ENCODE measurements at regions of chr12 and their contacts with region 1.

Region 1: DNA sequence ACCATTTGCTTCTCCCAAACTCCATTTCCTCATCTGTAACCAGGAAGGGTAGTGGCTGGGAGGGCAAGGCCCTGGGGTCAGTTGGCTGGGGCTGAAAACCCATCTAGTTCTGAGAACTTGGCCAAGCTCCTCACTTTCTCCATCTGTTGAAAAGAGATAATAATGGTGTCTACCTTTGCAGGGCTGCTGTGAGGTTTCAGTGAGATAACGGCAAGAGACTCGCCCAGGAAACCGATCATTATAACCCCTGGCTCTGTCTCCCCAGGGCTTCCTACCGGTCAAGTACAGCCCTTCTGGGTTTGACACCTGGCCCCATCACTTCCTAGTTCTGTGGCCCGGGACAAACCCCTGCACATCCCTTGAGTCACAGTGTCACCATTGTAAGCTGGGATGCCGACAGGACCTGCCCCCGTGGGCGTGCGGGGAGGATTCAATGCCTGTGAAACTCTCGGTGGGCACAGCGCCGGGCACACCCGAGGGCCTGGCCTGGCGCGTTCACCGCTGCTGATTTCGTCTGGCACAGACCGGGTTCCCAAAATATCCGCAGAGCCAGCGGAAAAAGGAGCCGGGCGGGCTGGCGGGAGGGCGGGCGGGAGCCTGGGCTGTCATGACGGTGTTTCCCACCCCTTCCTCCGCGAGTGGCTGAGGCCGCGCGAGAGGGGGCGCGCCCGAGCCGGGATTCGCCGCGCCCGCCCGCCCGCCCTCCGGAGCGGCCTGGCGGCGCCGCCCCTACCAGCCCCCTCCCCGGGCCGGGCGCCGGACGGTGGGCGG is 4.4 kb downstream of the KMT5A start:
- DNase-seq: peak; percentile 46 to 76 (median 51)
- H3K4me3 ChIP-seq: peak overlapping the region; percentile 79 to 93 (median 89)
- H3K4me3 Mint-ChIP-seq: peak overlapping the region; percentile 89 to 90
- H3K27ac ChIP-seq: peak overlapping the region; percentile 75 to 85
- H3K27ac Mint-ChIP-seq: peak overlapping the region; percentile 88 to 93 (median 91)
- H3K4me1 ChIP-seq: peaks cover 53 to 65% of the 10 kb centered on the region in 2 donors
- H3K4me1 Mint-ChIP-seq: peaks cover 57% of the 10 kb centered on the region
- H3K27me3 ChIP-seq: no peaks in the 10 kb centered on the region
- H3K27me3 Mint-ChIP-seq: peaks cover 0 to 6% (median 0%) of the 10 kb centered on the region in 3 donors
- CTCF ChIP-seq: peak; percentile 8

Region 2: GRCh38 chr12:123354600-123354999 is 33.8 kb before region 1 on chr12:
- intact Hi-C with region 1: loop called in 1 of 2 experiments (anchors 5 kb)
- DNase-seq: no peak
- H3K4me3 ChIP-seq: no peak overlapping the region
- H3K4me3 Mint-ChIP-seq: no peak overlapping the region
- H3K27ac ChIP-seq: no peak overlapping the region
- H3K27ac Mint-ChIP-seq: no peak overlapping the region
- H3K4me1 ChIP-seq: peaks cover 16 to 17% of the 10 kb centered on the region in 2 donors
- H3K4me1 Mint-ChIP-seq: peaks cover 27% of the 10 kb centered on the region
- H3K27me3 ChIP-seq: no peaks in the 10 kb centered on the region
- H3K27me3 Mint-ChIP-seq: peaks cover 0 to 3% (median 0%) of the 10 kb centered on the region in 3 donors
- CTCF ChIP-seq: no peak

Region 3: GRCh38 chr12:123365025-123365917 is 23.1 kb before region 1 on chr12:
- intact Hi-C with region 1: loop called (anchors 2 kb)
- DNase-seq: peak; percentile 97 to 99 (median 99)
- H3K4me3 ChIP-seq: peak overlapping the region; percentile 78 to 89 (median 87)
- H3K4me3 Mint-ChIP-seq: peak overlapping the region; percentile 91 to 94
- H3K27ac ChIP-seq: peak overlapping the region; percentile 93 to 96
- H3K27ac Mint-ChIP-seq: peak overlapping the region; percentile 97 to 99 (median 98)
- H3K4me1 ChIP-seq: peaks cover 25 to 28% of the 10 kb centered on the region in 2 donors
- H3K4me1 Mint-ChIP-seq: peaks cover 18% of the 10 kb centered on the region
- H3K27me3 ChIP-seq: no peaks in the 10 kb centered on the region
- H3K27me3 Mint-ChIP-seq: peaks cover 0 to 2% (median 2%) of the 10 kb centered on the region in 3 donors
- CTCF ChIP-seq: peak; percentile 82

Region 4: GRCh38 chr12:123436017-123436964 is 47.9 kb after region 1 on chr12 and contains the start of gene RILPL2:
- intact Hi-C with region 1: loop called (anchors 5 kb)
- DNase-seq: peak; percentile 96 to 99 (median 98)
- H3K4me3 ChIP-seq: peak within 1 kb of the TSS; percentile 72 to 98 (median 93)
- H3K4me3 Mint-ChIP-seq: peak within 1 kb of the TSS; percentile 98 to 99
- H3K27ac ChIP-seq: peak within 1 kb of the TSS; percentile 96 to 97
- H3K27ac Mint-ChIP-seq: peak within 1 kb of the TSS; percentile 98 to 100 (median 99)
- H3K4me1 ChIP-seq: peaks cover 52 to 55% of the 10 kb centered on the region in 2 donors
- H3K4me1 Mint-ChIP-seq: peaks cover 56% of the 10 kb centered on the region
- H3K27me3 ChIP-seq: no peaks in the 10 kb centered on the region
- H3K27me3 Mint-ChIP-seq: no peaks in the 10 kb centered on the region
- CTCF ChIP-seq: no peak
- polyA plus RNA-seq, gene RILPL2: 19.3 to 25.1 (median 21.0) TPM

Region 5: GRCh38 chr12:123457980-123458783 is 69.8 kb after region 1 on chr12 and contains the start of gene SNRNP35:
- intact Hi-C with region 1: loop called in 1 of 2 experiments (anchors 5 kb)
- DNase-seq: peak; percentile 73 to 76 (median 74)
- H3K4me3 ChIP-seq: peak within 1 kb of the TSS; percentile 56 to 98 (median 74)
- H3K4me3 Mint-ChIP-seq: peak within 1 kb of the TSS; percentile 97 to 99
- H3K27ac ChIP-seq: peak within 1 kb of the TSS; percentile 97 to 99
- H3K27ac Mint-ChIP-seq: peak within 1 kb of the TSS; percentile 99 to 100 (median 100)
- H3K4me1 ChIP-seq: peaks cover 16 to 18% of the 10 kb centered on the region in 2 donors
- H3K4me1 Mint-ChIP-seq: peaks cover 20% of the 10 kb centered on the region
- H3K27me3 ChIP-seq: no peaks in the 10 kb centered on the region
- H3K27me3 Mint-ChIP-seq: no peaks in the 10 kb centered on the region
- CTCF ChIP-seq: no peak
- polyA plus RNA-seq, gene SNRNP35: 13.4 to 19.5 (median 16.7) TPM

Region 6: DNA sequence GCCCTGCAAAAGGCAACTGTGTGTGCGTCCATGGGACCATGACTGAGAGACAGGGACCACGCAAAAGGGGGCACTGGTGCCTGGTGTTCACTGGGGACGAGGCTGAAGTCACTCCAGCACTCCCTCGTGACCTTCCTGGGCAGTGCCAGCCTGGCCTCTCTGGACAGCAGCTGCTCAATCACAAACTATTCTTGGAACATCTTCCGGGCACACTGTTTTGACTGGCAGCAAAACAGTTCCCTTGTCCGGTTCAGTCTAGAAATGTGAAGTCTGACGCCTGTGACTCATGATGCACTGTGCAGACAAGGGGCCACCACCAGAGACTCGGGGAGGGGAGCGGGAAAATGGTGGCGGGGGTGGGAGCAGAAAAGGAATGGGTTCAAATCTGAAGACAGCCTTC is 90.4 kb after region 1 on chr12:
- intact Hi-C with region 1: no loop called
- DNase-seq: no peak
- H3K4me3 ChIP-seq: no peak overlapping the region
- H3K4me3 Mint-ChIP-seq: no peak overlapping the region
- H3K27ac ChIP-seq: no peak overlapping the region
- H3K27ac Mint-ChIP-seq: no peak overlapping the region
- H3K4me1 ChIP-seq: no peaks in the 10 kb centered on the region
- H3K4me1 Mint-ChIP-seq: peaks cover 4% of the 10 kb centered on the region
- H3K27me3 ChIP-seq: no peaks in the 10 kb centered on the region
- H3K27me3 Mint-ChIP-seq: peaks cover 2 to 6% (median 5%) of the 10 kb centered on the region in 3 donors
- CTCF ChIP-seq: no peak

Region 7: DNA sequence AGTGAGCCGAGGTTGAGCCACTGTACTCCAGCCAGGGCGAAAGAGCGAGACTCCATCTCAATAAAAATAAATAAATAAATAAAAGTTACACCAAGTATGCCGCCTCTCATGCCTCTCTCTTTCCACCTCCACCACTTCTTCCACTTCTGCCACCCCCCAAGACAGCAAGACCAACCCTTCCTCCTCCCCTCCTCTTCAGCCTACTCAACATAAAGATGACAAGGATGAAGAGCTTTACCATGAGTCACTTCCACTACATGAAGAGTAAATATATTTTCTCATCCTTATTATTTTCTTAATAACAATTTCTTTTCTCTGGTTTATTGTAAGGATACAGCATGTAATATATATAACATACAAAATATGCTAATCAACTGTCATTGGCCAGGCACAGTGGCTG is 192.4 kb after region 1 on chr12:
- intact Hi-C with region 1: loop called in 1 of 2 experiments (anchors 5 kb)
- DNase-seq: no peak
- H3K4me3 ChIP-seq: no peak overlapping the region
- H3K4me3 Mint-ChIP-seq: no peak overlapping the region
- H3K27ac ChIP-seq: no peak overlapping the region
- H3K27ac Mint-ChIP-seq: no peak overlapping the region
- H3K4me1 ChIP-seq: peaks cover 23 to 29% of the 10 kb centered on the region in 2 donors
- H3K4me1 Mint-ChIP-seq: peaks cover 24% of the 10 kb centered on the region
- H3K27me3 ChIP-seq: no peaks in the 10 kb centered on the region
- H3K27me3 Mint-ChIP-seq: peaks cover 0 to 2% (median 2%) of the 10 kb centered on the region in 3 donors
- CTCF ChIP-seq: no peak

Measured in CD14-positive monocyte (primary cell).